CD8-positive, alpha-beta T cell (primary cell): ENCODE measurements at regions of chr10 and their contacts with region 1.

Region 1: GRCh38 chr10:44932517-44933450 is 21.6 kb downstream of the TMEM72 start:
- DNase-seq: peak; percentile 61 to 90 (median 83)
- ATAC-seq: peak; percentile 97
- H3K4me3 ChIP-seq: no peak overlapping the region
- H3K4me3 Mint-ChIP-seq: no peak overlapping the region
- H3K27ac ChIP-seq: no peak overlapping the region
- H3K27ac Mint-ChIP-seq: no peak overlapping the region
- H3K4me1 ChIP-seq: no peaks in the 10 kb centered on the region
- H3K4me1 Mint-ChIP-seq: peaks cover 6% of the 10 kb centered on the region
- H3K27me3 ChIP-seq: no peaks in the 10 kb centered on the region
- H3K27me3 Mint-ChIP-seq: no peaks in the 10 kb centered on the region
- CTCF ChIP-seq: peak; percentile 80

Region 2: GRCh38 chr10:44857363-44858016 is 75.3 kb before region 1 on chr10:
- CTCF ChIA-PET with region 1: no interaction called
- POLR2A ChIA-PET with region 1: no interaction called
- intact Hi-C with region 1: no loop called
- DNase-seq: peak in 8 of 9 experiments; percentile 33 to 69 (median 58)
- ATAC-seq: peak; percentile 84
- H3K4me3 ChIP-seq: no peak overlapping the region
- H3K4me3 Mint-ChIP-seq: no peak overlapping the region
- H3K27ac ChIP-seq: no peak overlapping the region
- H3K27ac Mint-ChIP-seq: no peak overlapping the region
- H3K4me1 ChIP-seq: no peaks in the 10 kb centered on the region
- H3K4me1 Mint-ChIP-seq: no peaks in the 10 kb centered on the region
- H3K27me3 ChIP-seq: no peaks in the 10 kb centered on the region
- H3K27me3 Mint-ChIP-seq: peaks cover 4% of the 10 kb centered on the region
- CTCF ChIP-seq: peak; percentile 93

Region 3: GRCh38 chr10:44947371-44948152 is 14.8 kb after region 1 on chr10:
- CTCF ChIA-PET with region 1: interaction called, 28 read pairs
- POLR2A ChIA-PET with region 1: no interaction called
- intact Hi-C with region 1: no loop called
- DNase-seq: peak in 2 of 9 experiments; percentile 7 to 33
- ATAC-seq: no peak
- H3K4me3 ChIP-seq: no peak overlapping the region
- H3K4me3 Mint-ChIP-seq: no peak overlapping the region
- H3K27ac ChIP-seq: no peak overlapping the region
- H3K27ac Mint-ChIP-seq: no peak overlapping the region
- H3K4me1 ChIP-seq: no peaks in the 10 kb centered on the region
- H3K4me1 Mint-ChIP-seq: no peaks in the 10 kb centered on the region
- H3K27me3 ChIP-seq: no peaks in the 10 kb centered on the region
- H3K27me3 Mint-ChIP-seq: peaks cover 6% of the 10 kb centered on the region
- CTCF ChIP-seq: no peak

Region 4: GRCh38 chr10:44952779-44953231 is 20.0 kb after region 1 on chr10:
- CTCF ChIA-PET with region 1: interaction called, 28 read pairs
- POLR2A ChIA-PET with region 1: no interaction called
- intact Hi-C with region 1: no loop called
- DNase-seq: no peak
- ATAC-seq: no peak
- H3K4me3 ChIP-seq: no peak overlapping the region
- H3K4me3 Mint-ChIP-seq: no peak overlapping the region
- H3K27ac ChIP-seq: no peak overlapping the region
- H3K27ac Mint-ChIP-seq: no peak overlapping the region
- H3K4me1 ChIP-seq: no peaks in the 10 kb centered on the region
- H3K4me1 Mint-ChIP-seq: peaks cover 13% of the 10 kb centered on the region
- H3K27me3 ChIP-seq: no peaks in the 10 kb centered on the region
- H3K27me3 Mint-ChIP-seq: no peaks in the 10 kb centered on the region
- CTCF ChIP-seq: no peak

Region 5: GRCh38 chr10:44959247-44960087 is 26.7 kb after region 1 on chr10 and contains the start of gene RASSF4:
- CTCF ChIA-PET with region 1: interaction called, 28 read pairs
- POLR2A ChIA-PET with region 1: no interaction called
- intact Hi-C with region 1: loop called in 1 of 2 experiments (anchors 1 kb)
- DNase-seq: peak; percentile 84 to 95 (median 92)
- ATAC-seq: peak; percentile 99
- H3K4me3 ChIP-seq: peak within 1 kb of the TSS; percentile 79 to 81
- H3K4me3 Mint-ChIP-seq: peak within 1 kb of the TSS; percentile 88
- H3K27ac ChIP-seq: peak within 1 kb of the TSS; percentile 49 to 67
- H3K27ac Mint-ChIP-seq: peak within 1 kb of the TSS; percentile 57
- H3K4me1 ChIP-seq: peaks cover 19% of the 10 kb centered on the region
- H3K4me1 Mint-ChIP-seq: peaks cover 32% of the 10 kb centered on the region
- H3K27me3 ChIP-seq: no peaks in the 10 kb centered on the region
- H3K27me3 Mint-ChIP-seq: no peaks in the 10 kb centered on the region
- CTCF ChIP-seq: no peak
- total RNA-seq, gene RASSF4: 0.30 to 0.31 TPM

Region 6: GRCh38 chr10:44965651-44966097 is 32.9 kb after region 1 on chr10:
- CTCF ChIA-PET with region 1: interaction called, 41 read pairs
- POLR2A ChIA-PET with region 1: no interaction called
- intact Hi-C with region 1: no loop called
- DNase-seq: peak in 1 of 9 experiments; percentile 36
- ATAC-seq: no peak
- H3K4me3 ChIP-seq: no peak overlapping the region
- H3K4me3 Mint-ChIP-seq: no peak overlapping the region
- H3K27ac ChIP-seq: no peak overlapping the region
- H3K27ac Mint-ChIP-seq: no peak overlapping the region
- H3K4me1 ChIP-seq: peaks cover 28% of the 10 kb centered on the region
- H3K4me1 Mint-ChIP-seq: peaks cover 31% of the 10 kb centered on the region
- H3K27me3 ChIP-seq: no peaks in the 10 kb centered on the region
- H3K27me3 Mint-ChIP-seq: no peaks in the 10 kb centered on the region
- CTCF ChIP-seq: no peak

Region 7: DNA sequence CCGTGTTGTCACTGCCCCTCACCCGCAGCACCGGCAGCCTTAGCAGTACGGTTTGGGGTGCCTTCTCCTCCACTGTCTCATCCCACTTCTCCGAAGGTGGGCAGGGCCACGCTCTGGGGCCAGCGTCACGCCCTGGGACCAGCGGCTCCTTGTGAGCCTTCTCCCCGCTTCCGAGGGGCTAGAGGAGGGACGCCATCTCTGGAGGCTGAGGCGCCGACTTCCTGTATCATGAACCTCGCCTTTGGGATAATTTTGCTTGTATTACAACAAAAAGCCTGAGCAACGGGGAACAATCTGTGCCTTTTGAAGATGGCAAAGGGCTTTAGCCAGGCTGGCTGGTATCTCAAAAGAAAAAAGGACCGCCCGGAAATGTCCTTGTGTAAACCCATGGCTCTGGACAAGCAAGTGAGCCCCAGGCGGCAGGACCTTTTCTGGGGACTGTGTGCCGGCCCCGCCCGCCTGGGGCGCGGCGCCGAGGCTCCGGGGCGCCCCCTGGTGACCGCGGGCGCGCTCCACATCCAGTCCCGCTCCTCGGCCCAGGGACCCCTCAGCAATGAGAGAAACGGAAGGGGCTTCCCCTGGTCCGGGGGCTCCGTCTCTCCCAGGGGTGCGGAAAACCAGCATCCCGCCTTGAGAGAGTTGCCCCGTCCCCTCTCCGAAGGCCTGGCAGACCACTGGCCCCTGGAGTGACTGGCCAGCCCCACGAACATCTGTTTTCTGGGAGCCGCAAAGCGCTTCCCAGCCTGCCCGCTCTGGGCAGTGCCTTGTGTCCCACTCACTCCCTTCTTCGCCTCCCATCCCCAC is 42.0 kb after region 1 on chr10:
- CTCF ChIA-PET with region 1: interaction called, 41 read pairs
- POLR2A ChIA-PET with region 1: no interaction called
- intact Hi-C with region 1: loop called in 1 of 2 experiments (anchors 1 kb)
- DNase-seq: peak; percentile 36 to 83 (median 56)
- ATAC-seq: peak; percentile 98
- H3K4me3 ChIP-seq: peak overlapping the region; percentile 44 to 48
- H3K4me3 Mint-ChIP-seq: peak overlapping the region; percentile 70
- H3K27ac ChIP-seq: peak overlapping the region in 1 of 2 experiments; percentile 44
- H3K27ac Mint-ChIP-seq: peak overlapping the region; percentile 27
- H3K4me1 ChIP-seq: peaks cover 20% of the 10 kb centered on the region
- H3K4me1 Mint-ChIP-seq: peaks cover 8% of the 10 kb centered on the region
- H3K27me3 ChIP-seq: no peaks in the 10 kb centered on the region
- H3K27me3 Mint-ChIP-seq: no peaks in the 10 kb centered on the region
- CTCF ChIP-seq: peak; percentile 90